ENCODE measurements at regions of chr7 and their contacts with region 1.

Region 1: GRCh38 chr7:157211690-157212089 is 73.0 kb downstream of the UBE3C start:
- DNase-seq: no peak
- H3K4me3 ChIP-seq: no peak overlapping the region
- H3K27ac ChIP-seq: no peak overlapping the region
- H3K4me1 ChIP-seq: no peaks in the 10 kb centered on the region
- H3K27me3 ChIP-seq: no peaks in the 10 kb centered on the region
- CTCF ChIP-seq: no peak
- EP300 ChIP-seq: no peak
- POLR2A ChIP-seq: no peak
- RAD21 ChIP-seq: no peak

Region 2: DNA sequence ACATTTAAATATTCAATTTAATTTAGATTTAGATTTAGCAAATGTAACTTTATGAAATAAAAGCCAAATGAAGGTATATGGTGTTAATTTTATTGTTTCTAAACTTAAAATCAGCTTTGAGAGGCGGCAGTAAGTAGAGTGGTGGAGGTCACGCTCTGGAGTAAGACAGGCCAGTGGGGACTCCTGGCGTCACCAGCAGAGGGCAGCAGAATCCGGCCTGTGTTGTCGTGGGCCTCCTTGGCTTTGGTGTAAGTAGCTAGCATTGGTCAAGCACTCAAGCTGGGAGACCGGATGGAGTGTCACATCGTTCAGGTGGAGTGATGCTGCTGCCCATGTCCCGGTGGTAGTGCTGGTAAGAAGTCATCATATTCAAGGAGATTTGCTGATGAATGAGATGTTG is 26.4 kb after region 1 on chr7:
- CTCF ChIA-PET with region 1: interaction called, 10 read pairs
- POLR2A ChIA-PET with region 1: interaction called, 3 read pairs
- DNase-seq: peak in 1 of 2 experiments; percentile 68
- H3K4me3 ChIP-seq: no peak overlapping the region
- H3K27ac ChIP-seq: no peak overlapping the region
- H3K4me1 ChIP-seq: no peaks in the 10 kb centered on the region
- H3K27me3 ChIP-seq: no peaks in the 10 kb centered on the region
- CTCF ChIP-seq: peak; percentile 56 to 80 (median 77)
- EP300 ChIP-seq: no peak
- POLR2A ChIP-seq: no peak
- RAD21 ChIP-seq: peak; percentile 44 to 61